ENCODE measurements at regions of chr2 and their contacts with region 1.

Region 1: DNA sequence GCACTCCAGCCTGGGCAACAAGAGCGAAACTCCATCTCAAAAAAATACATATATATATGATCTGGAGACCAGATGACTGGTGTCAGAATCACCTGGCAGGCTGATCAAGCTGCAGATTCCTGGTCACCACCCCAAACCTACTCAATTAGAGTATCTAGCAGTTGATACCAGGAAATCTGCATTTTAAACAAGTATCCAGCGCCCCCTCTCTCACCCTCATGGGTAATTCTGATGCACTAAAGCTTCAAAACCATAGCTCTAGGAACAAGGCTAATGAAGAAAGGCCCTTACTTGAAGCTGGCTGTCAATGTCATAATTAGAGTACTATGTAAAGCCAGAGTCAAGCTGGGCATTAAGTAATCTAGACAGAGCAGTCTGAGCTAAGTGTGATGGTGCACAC is 25.0 kb upstream of the PCBP1 start:
- DNase-seq: no peak
- H3K4me3 ChIP-seq: no peak overlapping the region
- H3K27ac ChIP-seq: no peak overlapping the region
- H3K4me1 ChIP-seq: no peaks in the 10 kb centered on the region
- H3K27me3 ChIP-seq: no peaks in the 10 kb centered on the region
- CTCF ChIP-seq: no peak
- EP300 ChIP-seq: no peak
- POLR2A ChIP-seq: no peak

Region 2: GRCh38 chr2:69964353-69964841 is 97.9 kb before region 1 on chr2:
- intact Hi-C with region 1: no loop called
- DNase-seq: peak; percentile 66 to 83
- H3K4me3 ChIP-seq: no peak overlapping the region
- H3K27ac ChIP-seq: peak overlapping the region; percentile 26 to 73 (median 65)
- H3K4me1 ChIP-seq: peaks cover 0 to 23% (median 14%) of the 10 kb centered on the region in 4 donors
- H3K27me3 ChIP-seq: no peaks in the 10 kb centered on the region
- CTCF ChIP-seq: no peak
- EP300 ChIP-seq: no peak
- POLR2A ChIP-seq: no peak

Region 3: DNA sequence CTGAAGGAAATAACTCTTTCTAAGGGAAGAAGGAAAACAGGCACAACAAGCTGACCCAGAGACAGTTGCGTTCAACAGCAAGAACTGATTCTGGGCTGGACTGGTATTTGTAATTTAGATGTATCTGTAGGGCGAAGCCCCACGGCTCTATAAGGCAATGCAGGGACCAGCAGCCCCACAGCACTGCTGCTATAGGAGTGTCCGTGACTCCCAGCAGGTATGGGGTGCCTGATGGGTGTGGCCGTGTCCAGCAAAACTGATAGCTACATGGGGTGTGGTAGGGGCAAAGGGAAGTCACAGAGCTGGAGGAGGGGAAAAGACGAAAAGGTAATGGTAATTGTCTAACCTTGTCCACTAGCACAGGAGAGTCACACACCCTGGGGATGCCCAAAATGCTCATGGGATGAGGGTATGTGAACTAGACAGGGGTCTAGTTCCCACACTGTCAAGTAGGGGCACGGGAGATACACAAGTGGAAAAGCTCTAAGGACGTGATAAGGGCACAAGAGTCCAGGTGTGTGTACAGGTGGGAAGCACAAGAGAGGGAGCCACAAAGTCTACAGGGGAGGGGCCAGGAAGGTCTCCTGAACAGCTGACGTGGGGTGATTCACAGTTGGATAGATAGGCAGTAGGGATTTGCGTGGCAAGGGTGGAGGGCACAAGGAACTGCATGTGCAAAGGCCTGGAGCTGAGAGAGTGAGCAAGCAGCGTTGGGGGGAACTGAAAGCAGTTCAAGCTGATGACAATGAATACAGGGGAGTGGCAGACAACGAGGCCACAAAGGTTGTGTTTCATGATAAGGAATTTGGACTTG is 52.3 kb before region 1 on chr2:
- intact Hi-C with region 1: loop called (anchors 5 kb)
- DNase-seq: peak; percentile 69 to 89
- H3K4me3 ChIP-seq: no peak overlapping the region
- H3K27ac ChIP-seq: peak overlapping the region; percentile 29 to 73 (median 66)
- H3K4me1 ChIP-seq: peaks cover 0 to 13% (median 4%) of the 10 kb centered on the region in 4 donors
- H3K27me3 ChIP-seq: no peaks in the 10 kb centered on the region
- CTCF ChIP-seq: no peak
- EP300 ChIP-seq: no peak
- POLR2A ChIP-seq: no peak